ENCODE measurements at regions of chr10 and their contacts with region 1.

Region 1: GRCh38 chr10:114550756-114551635 is 107.1 kb downstream of the ABLIM1 start:
- DNase-seq: peak; percentile 30
- ATAC-seq: no peak
- H3K4me3 ChIP-seq: no peak overlapping the region
- H3K27ac ChIP-seq: no peak overlapping the region
- H3K4me1 ChIP-seq: peaks cover 15% of the 10 kb centered on the region
- H3K27me3 ChIP-seq: no peaks in the 10 kb centered on the region
- CTCF ChIP-seq: peak; percentile 49; the same call in 1 of the 2 replicates
- EP300 ChIP-seq: no peak
- POLR2A ChIP-seq: no peak
- RAD21 ChIP-seq: peak; percentile 31; the same call in 1 of the 2 replicates

Region 2: GRCh38 chr10:114470956-114471905 is 79.8 kb before region 1 on chr10:
- CTCF ChIA-PET with region 1: interaction called, 57 read pairs
- POLR2A ChIA-PET with region 1: no interaction called
- in situ Hi-C with region 1: loop called (anchors 5 kb)
- intact Hi-C with region 1: loop called (anchors 1 kb)
- DNase-seq: peak; percentile 65
- ATAC-seq: peak; percentile 83
- H3K4me3 ChIP-seq: no peak overlapping the region
- H3K27ac ChIP-seq: peak overlapping the region; percentile 16
- H3K4me1 ChIP-seq: peaks cover 51% of the 10 kb centered on the region
- H3K27me3 ChIP-seq: no peaks in the 10 kb centered on the region
- CTCF ChIP-seq: peak; percentile 85
- EP300 ChIP-seq: no peak
- POLR2A ChIP-seq: no peak
- RAD21 ChIP-seq: peak; percentile 66

Region 3: GRCh38 chr10:114694752-114695151 is 143.8 kb after region 1 on chr10:
- CTCF ChIA-PET with region 1: interaction called, 33 read pairs
- POLR2A ChIA-PET with region 1: no interaction called
- in situ Hi-C with region 1: loop called (anchors 5 kb)
- intact Hi-C with region 1: loop called (anchors 1 kb)
- DNase-seq: peak; percentile 35
- ATAC-seq: peak; percentile 75
- H3K4me3 ChIP-seq: no peak overlapping the region
- H3K27ac ChIP-seq: no peak overlapping the region
- H3K4me1 ChIP-seq: no peaks in the 10 kb centered on the region
- H3K27me3 ChIP-seq: no peaks in the 10 kb centered on the region; a peak in 1 of 5 replicates
- CTCF ChIP-seq: peak; percentile 82
- EP300 ChIP-seq: no peak
- POLR2A ChIP-seq: no peak
- RAD21 ChIP-seq: peak; percentile 74

Region 4: GRCh38 chr10:114783686-114784085 is 232.7 kb after region 1 on chr10:
- CTCF ChIA-PET with region 1: interaction called, 8 read pairs
- POLR2A ChIA-PET with region 1: no interaction called
- in situ Hi-C with region 1: no loop called
- intact Hi-C with region 1: loop called (anchors 1 kb)
- DNase-seq: no peak
- ATAC-seq: no peak
- H3K4me3 ChIP-seq: no peak overlapping the region
- H3K27ac ChIP-seq: no peak overlapping the region
- H3K4me1 ChIP-seq: no peaks in the 10 kb centered on the region
- H3K27me3 ChIP-seq: no peaks in the 10 kb centered on the region; a peak in 1 of 5 replicates
- CTCF ChIP-seq: no peak
- EP300 ChIP-seq: no peak
- POLR2A ChIP-seq: no peak
- RAD21 ChIP-seq: no peak